ENCODE measurements at regions of chr19 and their contacts with region 1.

Region 1: DNA sequence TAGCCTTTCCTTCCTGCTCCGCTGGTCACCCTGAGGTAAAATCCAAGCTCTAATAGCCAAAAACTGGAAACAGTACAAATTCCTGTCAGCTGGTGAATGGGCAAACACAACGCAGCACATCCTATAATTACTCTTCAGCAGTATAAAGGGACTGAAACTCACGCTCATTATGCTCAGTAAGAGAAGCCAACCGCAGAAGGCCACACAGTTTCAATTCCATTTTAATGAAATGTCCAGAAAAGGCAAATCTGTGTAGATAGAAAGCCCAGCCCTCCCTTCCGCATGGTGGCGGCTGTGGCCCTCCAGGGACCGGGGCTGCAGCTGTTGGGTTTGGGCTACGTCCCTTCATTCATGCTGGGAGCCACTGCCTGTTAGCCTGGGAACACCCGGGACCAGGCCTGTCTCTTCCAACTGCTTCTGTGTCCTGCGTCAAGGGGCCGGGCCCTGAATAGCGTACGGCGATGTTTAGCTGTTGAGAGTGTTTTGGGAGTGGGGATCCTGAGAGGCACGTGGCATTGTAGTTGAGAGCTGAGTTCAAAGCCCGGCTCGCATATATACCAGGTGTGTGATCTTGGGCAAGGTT is 23.5 kb downstream of the NKPD1 start:
- DNase-seq: peak; percentile 61 to 68
- ATAC-seq: peak; percentile 64 to 88 (median 82)
- H3K4me3 ChIP-seq: peak overlapping the region in 3 of 10 donors; percentile 5 to 34 (median 10)
- H3K27ac ChIP-seq: peak overlapping the region in 9 of 10 donors; percentile 44 to 70 (median 65)
- H3K4me1 ChIP-seq: peaks cover 6 to 28% (median 21%) of the 10 kb centered on the region in 9 donors
- H3K27me3 ChIP-seq: no peaks in the 10 kb centered on the region
- CTCF ChIP-seq: no peak

Region 2: DNA sequence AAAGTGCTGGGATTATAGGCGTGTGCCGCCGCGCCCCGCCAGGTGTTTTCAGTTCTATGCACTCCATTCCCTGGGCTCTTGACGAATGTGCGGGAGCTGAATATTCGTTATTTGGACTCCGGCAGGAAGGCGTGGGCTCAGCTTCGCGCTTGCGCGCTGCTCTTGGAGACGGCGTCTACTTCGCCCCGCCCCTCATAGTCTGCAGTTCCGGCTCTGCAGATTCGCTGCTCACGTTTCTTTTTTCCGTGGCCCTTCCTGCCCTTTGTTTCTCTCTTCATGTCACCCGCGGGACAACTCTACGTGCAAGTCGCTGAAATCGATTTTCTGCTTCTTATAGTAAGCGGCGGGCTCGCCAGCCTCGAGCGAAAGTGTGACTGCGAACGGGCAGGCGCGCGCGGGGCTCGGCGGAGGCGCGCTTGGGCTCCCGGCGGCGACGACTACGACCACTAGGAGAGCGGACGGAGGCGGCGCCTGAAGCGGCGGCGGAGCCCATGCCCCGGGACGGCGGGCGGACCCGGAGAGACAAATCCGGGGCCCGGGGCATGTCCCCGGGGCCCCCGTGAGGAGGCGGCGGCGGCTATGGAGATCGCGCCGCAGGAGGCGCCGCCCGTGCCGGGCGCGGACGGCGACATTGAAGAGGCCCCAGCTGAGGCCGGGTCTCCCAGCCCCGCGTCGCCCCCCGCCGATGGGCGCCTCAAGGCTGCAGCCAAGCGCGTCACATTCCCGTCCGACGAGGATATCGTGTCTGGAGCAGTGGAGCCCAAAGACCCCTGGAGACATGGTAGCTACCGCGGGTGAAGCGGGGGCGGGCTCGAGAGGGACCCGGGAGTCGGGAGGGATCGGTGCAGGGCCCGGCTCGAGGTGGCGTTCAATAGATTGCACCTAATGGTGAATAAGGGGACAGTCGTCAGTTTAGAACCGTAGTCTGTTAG is 44.3 kb before region 1 on chr19 and contains the start of gene PPP1R37:
- intact Hi-C with region 1: loop called in 1 of 10 experiments (anchors 2 kb)
- DNase-seq: peak; percentile 93 to 95
- ATAC-seq: peak; percentile 89 to 96 (median 92)
- H3K4me3 ChIP-seq: peak within 1 kb of the TSS; percentile 77 to 99 (median 92)
- H3K27ac ChIP-seq: peak within 1 kb of the TSS; percentile 23 to 97 (median 88)
- H3K4me1 ChIP-seq: peaks cover 14 to 66% (median 52%) of the 10 kb centered on the region in 9 donors
- H3K27me3 ChIP-seq: no peaks in the 10 kb centered on the region
- CTCF ChIP-seq: peak in 8 of 9 donors; percentile 15 to 57 (median 40)
- total RNA-seq, gene PPP1R37: 12.5 to 19.2 (median 15.8) TPM

Region 3: GRCh38 chr19:45123430-45123850 is 13.8 kb before region 1 on chr19:
- intact Hi-C with region 1: no loop called
- DNase-seq: no peak
- ATAC-seq: no peak
- H3K4me3 ChIP-seq: no peak overlapping the region
- H3K27ac ChIP-seq: no peak overlapping the region
- H3K4me1 ChIP-seq: peaks cover 0 to 16% (median 5%) of the 10 kb centered on the region in 9 donors
- H3K27me3 ChIP-seq: no peaks in the 10 kb centered on the region
- CTCF ChIP-seq: no peak